SK-N-SH (cell line): ENCODE measurements at regions of chr18 and their contacts with region 1.

Region 1: GRCh38 chr18:62957885-62958472 is 242.6 kb downstream of the PHLPP1 start:
- DNase-seq: no peak
- H3K4me3 ChIP-seq: no peak overlapping the region
- H3K27ac ChIP-seq: no peak overlapping the region
- H3K4me1 ChIP-seq: no peaks in the 10 kb centered on the region
- H3K27me3 ChIP-seq: no peaks in the 10 kb centered on the region
- CTCF ChIP-seq: peak; percentile 73
- EP300 ChIP-seq: no peak
- RAD21 ChIP-seq: peak; percentile 58

Region 2: DNA sequence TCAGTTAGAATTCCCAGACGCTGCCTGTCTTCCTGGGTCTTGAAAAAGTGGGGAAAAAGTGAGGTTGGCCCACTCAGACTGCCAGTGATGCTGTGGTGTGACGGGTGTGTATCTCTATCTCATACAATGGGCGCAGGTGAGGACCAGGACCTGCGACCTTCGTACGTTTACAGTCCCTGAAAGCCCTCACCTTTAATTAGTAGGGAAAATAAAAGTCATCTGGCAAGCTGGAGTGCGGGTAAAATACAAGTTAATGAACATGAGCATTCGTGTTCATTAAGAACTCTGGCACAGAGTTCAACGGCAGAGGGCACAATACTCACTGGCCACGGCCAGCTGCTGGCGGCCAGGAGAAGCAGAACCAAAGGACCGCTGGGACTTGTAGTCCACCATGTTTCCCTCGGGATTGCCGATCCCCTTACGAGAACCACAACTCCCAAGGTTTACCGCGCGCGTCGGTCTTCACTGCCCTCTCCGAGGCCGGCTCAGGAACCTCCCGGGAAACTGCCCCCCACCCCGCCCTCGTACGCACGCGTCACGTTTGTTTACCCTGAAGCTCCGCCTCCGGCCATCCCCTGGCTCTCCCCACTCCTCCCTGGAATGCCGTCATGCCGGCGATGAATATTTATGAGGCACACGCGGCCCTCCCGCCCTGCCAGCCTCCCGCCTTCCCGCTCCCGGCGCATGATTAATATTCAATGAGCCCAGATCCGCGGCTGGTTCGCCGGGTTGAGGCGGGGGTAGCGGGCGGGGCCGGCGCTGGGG is 243.1 kb before region 1 on chr18:
- CTCF ChIA-PET with region 1: interaction called, 49 read pairs
- POLR2A ChIA-PET with region 1: no interaction called
- DNase-seq: peak; percentile 96
- H3K4me3 ChIP-seq: peak overlapping the region; percentile 56 to 77
- H3K27ac ChIP-seq: peak overlapping the region; percentile 73 to 77
- H3K4me1 ChIP-seq: peaks cover 0 to 11% of the 10 kb centered on the region in 2 experiments; a peak in 3 of 4 replicates
- H3K27me3 ChIP-seq: no peaks in the 10 kb centered on the region
- CTCF ChIP-seq: peak; percentile 88
- EP300 ChIP-seq: no peak
- RAD21 ChIP-seq: peak; percentile 84

Region 3: DNA sequence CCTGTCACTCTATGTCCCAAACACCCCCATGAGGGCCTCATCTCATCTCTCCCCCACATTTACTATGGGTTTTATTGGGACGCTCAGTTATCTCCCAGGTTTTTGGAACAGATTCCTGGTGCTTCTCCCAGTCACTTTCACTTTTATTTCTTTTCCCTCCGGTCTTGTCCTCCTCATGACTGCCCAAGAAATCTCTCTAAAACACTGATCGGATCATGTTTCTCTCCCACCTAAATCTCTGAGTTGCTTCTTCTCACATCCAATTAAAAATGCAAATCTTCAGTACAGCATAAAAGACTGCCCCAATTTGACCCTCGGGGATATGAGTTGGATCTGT is 30.5 kb after region 1 on chr18:
- CTCF ChIA-PET with region 1: no interaction called
- POLR2A ChIA-PET with region 1: no interaction called
- DNase-seq: no peak
- H3K4me3 ChIP-seq: no peak overlapping the region
- H3K27ac ChIP-seq: no peak overlapping the region
- H3K4me1 ChIP-seq: no peaks in the 10 kb centered on the region; a peak in 1 of 4 replicates
- H3K27me3 ChIP-seq: no peaks in the 10 kb centered on the region
- CTCF ChIP-seq: no peak
- EP300 ChIP-seq: no peak
- RAD21 ChIP-seq: no peak

Region 4: DNA sequence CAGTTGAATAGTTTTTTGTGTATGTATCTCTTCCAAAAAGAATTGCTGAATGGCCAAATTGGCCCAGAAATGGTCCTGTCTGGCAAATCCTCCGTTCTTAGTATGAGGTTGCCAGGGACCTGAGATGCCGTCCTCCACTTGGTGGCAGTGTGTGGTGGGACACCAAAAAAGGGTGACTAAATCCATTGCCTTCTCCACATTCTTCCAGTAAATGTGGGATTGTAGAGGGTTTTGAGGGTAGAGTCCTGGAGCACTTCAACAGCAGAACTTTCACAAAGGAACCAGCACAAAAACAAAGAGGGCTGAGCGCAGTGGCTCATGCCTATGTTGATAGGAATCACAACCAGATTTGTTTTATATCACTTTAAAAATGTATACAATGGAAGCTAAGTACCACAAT is 161.7 kb after region 1 on chr18:
- CTCF ChIA-PET with region 1: no interaction called
- POLR2A ChIA-PET with region 1: no interaction called
- DNase-seq: peak; percentile 59
- H3K4me3 ChIP-seq: no peak overlapping the region
- H3K27ac ChIP-seq: 0 out of 4 replicates have a peak overlapping the region, but pooled peaks of 1 of the 2 experiments have one; percentile 28
- H3K4me1 ChIP-seq: no peaks in the 10 kb centered on the region; a peak in 2 of 4 replicates
- H3K27me3 ChIP-seq: no peaks in the 10 kb centered on the region
- CTCF ChIP-seq: peak; percentile 45
- EP300 ChIP-seq: no peak
- RAD21 ChIP-seq: peak; percentile 73